HAP-1 (cell line): ENCODE measurements at regions of chr14 and their contacts with region 1.

Region 1: GRCh38 chr14:37874429-37875191 is 279.2 kb downstream of the TTC6 start:
- DNase-seq: peak; percentile 72 to 92
- H3K4me3 ChIP-seq: no peak overlapping the region
- H3K4me1 ChIP-seq: peaks cover 8% of the 10 kb centered on the region; the same call in 1 of the 2 replicates
- H3K27me3 ChIP-seq: no peaks in the 10 kb centered on the region

Region 2: DNA sequence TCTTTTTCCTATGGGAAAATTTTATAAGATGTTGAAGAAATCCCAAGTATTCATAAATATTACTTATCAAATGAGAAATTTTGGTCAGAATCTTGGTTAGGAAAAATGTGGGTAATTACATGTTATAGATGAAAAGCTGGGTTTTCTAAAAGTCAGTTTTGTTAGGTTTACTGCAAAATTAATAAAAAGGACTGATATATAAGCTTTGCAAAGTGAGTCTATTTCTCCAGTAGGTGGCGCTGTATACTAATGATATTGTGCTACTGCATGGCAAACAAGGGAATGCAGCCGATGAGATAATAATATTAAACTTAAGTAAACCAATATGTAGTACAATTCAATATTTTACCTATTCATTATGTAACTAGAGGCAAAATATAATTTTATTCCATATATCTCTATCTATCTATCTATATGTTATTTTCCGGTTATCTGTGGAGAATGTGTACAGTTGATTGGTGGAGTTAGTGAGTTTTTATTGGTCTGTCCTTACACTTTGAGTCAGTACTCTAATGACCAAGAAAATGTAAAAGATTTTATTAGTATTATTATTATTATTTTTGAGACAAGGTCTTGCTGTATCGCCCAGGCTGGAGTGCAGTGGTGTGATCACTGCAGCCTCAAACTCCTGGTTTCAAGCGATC is 643.9 kb before region 1 on chr14:
- in situ Hi-C with region 1: loop called (anchors 10 kb)
- DNase-seq: peak; percentile 22 to 54
- H3K4me3 ChIP-seq: no peak overlapping the region
- H3K4me1 ChIP-seq: no peaks in the 10 kb centered on the region
- H3K27me3 ChIP-seq: no peaks in the 10 kb centered on the region

Region 3: DNA sequence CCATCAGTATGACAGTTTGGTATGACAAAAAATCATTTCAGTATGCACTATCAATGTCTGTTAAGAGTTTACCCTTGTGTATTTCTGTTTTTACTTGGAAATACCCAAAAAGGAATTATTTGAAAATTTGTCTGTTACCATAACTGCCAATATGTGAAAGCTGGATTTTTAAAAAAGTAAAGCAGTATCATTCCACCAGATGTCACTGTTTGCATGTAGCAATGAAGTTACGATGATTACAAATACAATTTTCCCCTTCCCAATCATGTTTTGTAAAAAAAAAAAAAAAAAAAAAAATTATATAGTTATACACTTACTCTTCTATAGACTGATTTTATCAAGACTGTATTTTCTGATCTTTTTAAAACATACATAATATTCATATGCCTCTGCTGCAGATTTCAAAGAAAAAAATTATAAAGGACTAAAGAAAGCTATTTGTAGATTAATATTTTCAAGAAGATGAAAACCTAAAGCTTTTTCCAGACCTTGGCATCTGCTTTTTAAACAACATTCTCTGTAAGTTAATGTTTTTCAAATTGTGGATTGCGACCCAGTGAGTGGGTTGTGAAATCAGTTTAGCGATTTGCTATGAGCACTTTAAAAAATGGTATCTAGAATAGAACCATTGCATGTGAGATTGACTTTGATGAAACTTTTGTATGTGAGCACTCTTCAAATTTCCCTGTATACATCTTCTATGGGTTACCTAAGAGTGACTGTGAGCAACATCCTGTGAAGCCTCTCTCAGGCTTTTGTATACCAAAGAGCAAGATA is 165.0 kb before region 1 on chr14:
- in situ Hi-C with region 1: loop called (anchors 5 kb)
- DNase-seq: peak in 1 of 2 experiments; percentile 21
- H3K4me3 ChIP-seq: no peak overlapping the region
- H3K4me1 ChIP-seq: peaks cover 16% of the 10 kb centered on the region
- H3K27me3 ChIP-seq: no peaks in the 10 kb centered on the region